AG04449 (cell line): ENCODE measurements at regions of chr11 and their contacts with region 1.

Region 1: GRCh38 chr11:31641477-31642062 is 132.0 kb downstream of the ELP4 start:
- DNase-seq: no peak
- H3K4me3 ChIP-seq: no peak overlapping the region
- CTCF ChIP-seq: peak; percentile 48

Region 2: DNA sequence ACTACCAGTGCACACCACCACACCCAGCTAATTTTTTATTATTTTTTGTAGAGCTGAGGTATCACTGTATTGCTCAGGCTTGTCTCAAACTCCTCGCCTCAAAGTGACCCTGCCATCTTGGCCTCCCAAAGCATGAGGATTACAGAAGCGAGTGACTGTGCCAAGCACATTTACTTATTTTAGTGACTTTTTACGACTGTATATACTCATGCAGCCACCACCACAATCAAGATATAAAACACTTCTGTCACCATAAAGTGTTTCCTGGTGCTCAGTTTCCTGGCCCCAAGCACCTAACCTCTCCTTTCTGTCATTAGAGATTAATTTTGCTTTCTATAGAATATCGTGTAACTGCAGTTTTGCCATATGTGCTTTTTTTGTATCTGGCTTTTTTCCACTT is 106.1 kb before region 1 on chr11:
- CTCF ChIA-PET with region 1: no interaction called
- POLR2A ChIA-PET with region 1: no interaction called
- DNase-seq: no peak
- H3K4me3 ChIP-seq: no peak overlapping the region
- CTCF ChIP-seq: no peak

Region 3: DNA sequence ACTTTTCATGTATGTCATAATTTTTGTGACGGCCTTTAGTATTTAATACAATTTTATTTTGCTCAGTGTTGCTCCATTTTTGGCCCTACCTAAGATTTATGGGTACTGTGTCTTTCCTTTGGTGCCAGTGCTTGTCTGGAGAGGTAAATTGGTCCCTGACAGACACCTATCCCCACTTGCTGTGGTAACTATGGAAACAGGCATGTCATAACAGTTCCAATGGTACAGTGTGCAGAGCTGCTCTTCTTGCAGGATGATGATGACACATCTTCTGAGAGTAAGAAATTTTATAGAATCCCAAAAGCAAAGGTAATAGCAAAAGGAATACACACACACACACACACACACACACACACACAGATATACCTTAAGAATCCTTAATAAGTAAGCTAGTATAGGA is 13.5 kb before region 1 on chr11:
- CTCF ChIA-PET with region 1: interaction called, 34 read pairs
- POLR2A ChIA-PET with region 1: no interaction called
- DNase-seq: no peak
- H3K4me3 ChIP-seq: no peak overlapping the region
- CTCF ChIP-seq: no peak

Region 4: GRCh38 chr11:31655483-31655882 is 13.9 kb after region 1 on chr11:
- CTCF ChIA-PET with region 1: interaction called, 19 read pairs
- POLR2A ChIA-PET with region 1: interaction called, 3 read pairs
- DNase-seq: peak; percentile 65
- H3K4me3 ChIP-seq: no peak overlapping the region
- CTCF ChIP-seq: no peak

Region 5: DNA sequence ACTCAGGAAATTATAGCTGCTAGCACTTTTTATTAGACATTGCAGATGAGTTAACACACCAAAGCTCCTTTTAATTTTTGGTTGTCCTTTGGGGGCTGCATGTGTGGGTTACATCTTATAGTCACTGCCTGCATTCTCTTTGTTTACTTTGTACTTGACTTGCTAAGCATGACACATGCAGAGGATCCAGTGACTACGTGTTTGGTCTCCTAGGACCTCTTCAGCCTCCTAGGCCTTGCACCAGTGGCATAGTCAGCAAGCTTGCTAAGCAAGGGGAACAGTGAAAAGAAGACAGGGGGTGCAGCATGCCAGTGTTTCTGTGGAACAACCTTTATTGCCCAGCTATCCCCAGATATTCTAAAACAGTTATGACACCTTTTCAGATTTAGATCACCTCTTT is 61.4 kb after region 1 on chr11:
- CTCF ChIA-PET with region 1: no interaction called
- POLR2A ChIA-PET with region 1: no interaction called
- DNase-seq: no peak
- H3K4me3 ChIP-seq: no peak overlapping the region
- CTCF ChIP-seq: no peak